Upper lobe of right lung (tissue), 1 donor: ENCODE measurements at regions of chr2 and their contacts with region 1.

Region 1: DNA sequence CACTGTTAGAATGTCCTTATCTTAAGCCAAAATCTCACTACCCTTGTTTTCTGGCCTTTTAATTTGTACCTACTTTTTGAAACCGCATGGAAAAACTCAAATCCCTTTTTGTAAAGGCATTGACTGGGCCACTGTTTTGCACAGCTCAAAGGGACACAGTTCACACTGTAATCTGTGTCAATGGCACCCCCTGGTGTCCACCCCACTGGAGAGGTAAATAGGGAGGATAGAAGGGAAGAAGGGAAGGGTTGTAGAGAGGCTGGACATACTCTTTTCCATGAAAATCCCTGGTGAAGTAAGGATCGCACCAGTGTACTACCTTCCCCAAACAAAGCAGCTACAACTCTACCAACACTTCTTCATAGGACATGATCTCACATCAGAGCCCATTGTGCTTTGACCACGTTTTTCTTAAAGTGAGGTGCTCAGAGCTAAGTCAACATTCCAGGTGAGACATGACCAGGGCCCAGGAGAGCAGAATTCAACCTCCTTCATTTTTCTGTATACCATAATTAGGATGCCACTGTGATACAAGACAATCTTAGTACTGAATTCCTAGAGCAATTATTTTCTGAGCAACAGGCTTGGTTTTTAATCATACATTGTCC is 92.4 kb upstream of the RMDN2 start:
- DNase-seq: peak; percentile 87
- ATAC-seq: peak; percentile 94
- H3K4me3 ChIP-seq: no peak overlapping the region
- H3K27ac ChIP-seq: no peak overlapping the region
- H3K4me1 ChIP-seq: peaks cover 23% of the 10 kb centered on the region
- H3K27me3 ChIP-seq: no peaks in the 10 kb centered on the region
- CTCF ChIP-seq: peak; percentile 87

Region 2: GRCh38 chr2:37414470-37414949 is 418.2 kb before region 1 on chr2:
- intact Hi-C with region 1: loop called (anchors 10 kb)
- DNase-seq: no peak
- ATAC-seq: peak; percentile 85
- H3K4me3 ChIP-seq: no peak overlapping the region
- H3K27ac ChIP-seq: no peak overlapping the region
- H3K4me1 ChIP-seq: no peaks in the 10 kb centered on the region
- H3K27me3 ChIP-seq: no peaks in the 10 kb centered on the region
- CTCF ChIP-seq: peak; percentile 84

Region 3: DNA sequence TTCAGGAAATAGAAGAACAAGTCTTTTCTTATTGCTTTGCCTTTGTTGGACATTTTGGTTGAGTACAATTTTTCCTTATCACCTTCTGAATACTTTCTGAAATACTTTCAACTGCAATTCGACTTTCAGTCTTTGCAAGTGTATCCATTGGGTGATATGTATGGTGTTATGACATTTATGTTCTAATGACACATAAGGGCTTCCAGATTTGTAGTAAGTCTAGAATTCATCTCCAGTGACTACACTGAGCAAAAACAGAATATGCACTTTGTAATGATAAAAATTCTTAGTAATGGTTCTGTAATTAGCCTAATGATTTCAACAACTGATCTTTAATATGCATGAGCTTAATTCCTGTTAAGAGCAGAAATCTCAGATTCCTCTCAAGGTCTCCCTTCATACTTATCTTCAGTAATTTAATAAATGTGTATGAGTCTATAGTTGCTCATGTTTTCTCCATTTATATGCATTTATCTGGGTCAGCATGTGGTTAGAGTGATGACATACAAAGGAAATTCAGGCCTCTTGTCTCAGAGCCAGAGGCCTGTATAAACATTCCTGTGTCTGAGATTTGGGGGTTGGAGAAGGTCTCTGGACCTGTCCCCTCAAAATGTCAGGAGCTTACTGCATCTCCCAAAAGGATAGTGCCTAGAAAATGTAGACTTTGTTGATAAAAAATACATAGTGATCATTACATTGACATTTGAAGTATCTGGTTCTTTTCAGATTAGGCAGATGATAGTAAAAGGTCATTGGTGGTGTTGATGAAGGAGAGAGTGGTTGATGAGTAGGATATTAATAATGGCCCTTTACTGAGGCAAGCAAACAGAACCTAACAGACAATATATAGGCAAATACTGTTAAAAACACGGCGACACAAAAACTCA is 373.4 kb before region 1 on chr2:
- intact Hi-C with region 1: no loop called
- DNase-seq: no peak
- ATAC-seq: no peak
- H3K4me3 ChIP-seq: no peak overlapping the region
- H3K27ac ChIP-seq: peak overlapping the region; percentile 53
- H3K4me1 ChIP-seq: peaks cover 18% of the 10 kb centered on the region
- H3K27me3 ChIP-seq: no peaks in the 10 kb centered on the region
- CTCF ChIP-seq: no peak